Natural killer cell (primary cell): ENCODE measurements at regions of chr17 and their contacts with region 1.

Region 1: GRCh38 chr17:21511363-21512198 is 135.4 kb downstream of the KCNJ12 start:
- DNase-seq: peak; percentile 60 to 81
- ATAC-seq: peak; percentile 79 to 81 (median 80)
- H3K4me3 ChIP-seq: peak overlapping the region; percentile 42
- H3K4me3 Mint-ChIP-seq: peak overlapping the region; percentile 82
- H3K27ac ChIP-seq: no peak overlapping the region
- H3K27ac Mint-ChIP-seq: peak overlapping the region in 1 of 2 donors; percentile 44
- H3K4me1 ChIP-seq: peaks cover 16% of the 10 kb centered on the region
- H3K4me1 Mint-ChIP-seq: peaks cover 11 to 17% of the 10 kb centered on the region in 2 donors
- H3K27me3 ChIP-seq: peaks cover 23% of the 10 kb centered on the region
- H3K27me3 Mint-ChIP-seq: peaks cover 31 to 52% of the 10 kb centered on the region in 2 donors
- CTCF ChIP-seq: peak; percentile 80

Region 2: DNA sequence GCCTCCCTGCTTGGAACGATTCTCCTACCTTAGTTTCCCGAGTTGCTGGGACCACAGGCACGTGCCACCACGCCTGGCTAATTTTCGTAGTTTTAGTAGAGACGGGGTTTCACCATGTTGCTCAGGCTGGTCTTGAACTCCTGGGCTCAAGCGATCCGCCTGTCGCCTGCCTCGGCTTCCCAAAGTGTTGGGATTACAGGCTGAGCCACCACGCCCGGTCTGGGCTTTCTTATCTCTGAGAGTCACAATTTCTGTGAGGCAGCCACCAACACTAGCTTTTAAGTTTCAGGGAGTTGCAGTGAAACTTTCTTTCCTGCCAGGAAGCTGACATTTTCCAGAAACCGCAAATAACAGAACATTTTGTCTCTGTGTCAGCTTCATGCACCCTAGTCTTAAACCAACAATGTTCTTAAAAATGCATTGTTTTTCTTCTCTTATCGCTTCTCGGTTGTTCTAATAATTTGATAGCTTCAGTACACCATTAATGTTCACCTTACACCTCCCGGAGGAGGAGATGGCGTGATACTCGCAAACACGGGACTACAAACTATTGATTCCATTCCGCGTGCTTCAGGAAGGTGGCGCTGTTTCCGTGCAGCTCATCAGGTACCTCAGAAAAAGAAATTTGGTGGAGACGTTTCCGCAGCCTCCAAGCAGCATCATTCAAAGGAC is 392.2 kb before region 1 on chr17:
- intact Hi-C with region 1: loop called (anchors 1 kb)
- DNase-seq: peak; percentile 58 to 90
- ATAC-seq: peak; percentile 80 to 94 (median 85)
- H3K4me3 ChIP-seq: no peak overlapping the region
- H3K4me3 Mint-ChIP-seq: no peak overlapping the region
- H3K27ac ChIP-seq: no peak overlapping the region
- H3K27ac Mint-ChIP-seq: peak overlapping the region in 1 of 2 donors; percentile 7
- H3K4me1 ChIP-seq: no peaks in the 10 kb centered on the region
- H3K4me1 Mint-ChIP-seq: peaks cover 6% of the 10 kb centered on the region in 2 donors
- H3K27me3 ChIP-seq: no peaks in the 10 kb centered on the region
- H3K27me3 Mint-ChIP-seq: peaks cover 7 to 9% of the 10 kb centered on the region in 2 donors
- CTCF ChIP-seq: peak; percentile 81

Region 3: GRCh38 chr17:21318439-21318838 is 193.1 kb before region 1 on chr17:
- intact Hi-C with region 1: loop called (anchors 10 kb)
- DNase-seq: no peak
- ATAC-seq: no peak
- H3K4me3 ChIP-seq: no peak overlapping the region
- H3K4me3 Mint-ChIP-seq: no peak overlapping the region
- H3K27ac ChIP-seq: no peak overlapping the region
- H3K27ac Mint-ChIP-seq: no peak overlapping the region
- H3K4me1 ChIP-seq: peaks cover 12% of the 10 kb centered on the region
- H3K4me1 Mint-ChIP-seq: peaks cover 0 to 7% of the 10 kb centered on the region in 2 donors
- H3K27me3 ChIP-seq: no peaks in the 10 kb centered on the region
- H3K27me3 Mint-ChIP-seq: peaks cover 0 to 2% of the 10 kb centered on the region in 2 donors
- CTCF ChIP-seq: no peak

Region 4: GRCh38 chr17:21457051-21458026 is 54.2 kb before region 1 on chr17:
- intact Hi-C with region 1: loop called (anchors 1 kb)
- DNase-seq: peak; percentile 93 to 94
- ATAC-seq: peak; percentile 91 to 96 (median 93)
- H3K4me3 ChIP-seq: no peak overlapping the region
- H3K4me3 Mint-ChIP-seq: no peak overlapping the region
- H3K27ac ChIP-seq: no peak overlapping the region
- H3K27ac Mint-ChIP-seq: peak overlapping the region in 1 of 2 donors; percentile 84
- H3K4me1 ChIP-seq: peaks cover 17% of the 10 kb centered on the region
- H3K4me1 Mint-ChIP-seq: peaks cover 7 to 28% of the 10 kb centered on the region in 2 donors
- H3K27me3 ChIP-seq: no peaks in the 10 kb centered on the region
- H3K27me3 Mint-ChIP-seq: peaks cover 0 to 15% of the 10 kb centered on the region in 2 donors
- CTCF ChIP-seq: peak; percentile 96

Region 5: DNA sequence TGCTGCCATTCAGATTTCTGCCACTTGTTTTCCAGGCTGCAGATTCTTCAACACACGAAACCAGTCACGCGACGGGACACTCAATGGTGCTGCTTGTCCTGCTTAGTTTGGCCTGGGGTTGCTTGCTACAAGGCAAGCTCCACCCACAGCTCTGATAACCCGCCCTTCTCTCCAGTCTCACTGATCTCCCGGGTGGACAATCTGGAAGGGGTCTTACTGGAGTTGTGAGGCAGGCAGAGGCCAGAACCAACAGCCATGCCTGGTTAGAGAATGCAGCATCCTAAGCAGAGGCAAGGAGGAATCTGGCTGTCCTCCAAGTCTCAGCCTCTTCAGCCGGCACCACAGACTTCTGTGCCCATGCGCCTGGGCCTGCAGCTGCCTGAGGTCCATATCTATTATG is 16.3 kb before region 1 on chr17:
- intact Hi-C with region 1: no loop called
- DNase-seq: no peak
- ATAC-seq: no peak
- H3K4me3 ChIP-seq: no peak overlapping the region
- H3K4me3 Mint-ChIP-seq: no peak overlapping the region
- H3K27ac ChIP-seq: no peak overlapping the region
- H3K27ac Mint-ChIP-seq: no peak overlapping the region
- H3K4me1 ChIP-seq: no peaks in the 10 kb centered on the region
- H3K4me1 Mint-ChIP-seq: no peaks in the 10 kb centered on the region
- H3K27me3 ChIP-seq: peaks cover 3% of the 10 kb centered on the region
- H3K27me3 Mint-ChIP-seq: peaks cover 13 to 20% of the 10 kb centered on the region in 2 donors
- CTCF ChIP-seq: no peak

Region 6: GRCh38 chr17:21678393-21679081 is 167.0 kb after region 1 on chr17:
- intact Hi-C with region 1: no loop called
- DNase-seq: no peak
- ATAC-seq: no peak
- H3K4me3 ChIP-seq: no peak overlapping the region
- H3K4me3 Mint-ChIP-seq: no peak overlapping the region
- H3K27ac ChIP-seq: no peak overlapping the region
- H3K27ac Mint-ChIP-seq: no peak overlapping the region
- H3K4me1 ChIP-seq: no peaks in the 10 kb centered on the region
- H3K4me1 Mint-ChIP-seq: peaks cover 0 to 3% of the 10 kb centered on the region in 2 donors
- H3K27me3 ChIP-seq: no peaks in the 10 kb centered on the region
- H3K27me3 Mint-ChIP-seq: peaks cover 0 to 3% of the 10 kb centered on the region in 2 donors
- CTCF ChIP-seq: no peak